Naive thymus-derived CD4-positive, alpha-beta T cell (primary cell): ENCODE measurements at regions of chr14 and their contacts with region 1.

Region 1: DNA sequence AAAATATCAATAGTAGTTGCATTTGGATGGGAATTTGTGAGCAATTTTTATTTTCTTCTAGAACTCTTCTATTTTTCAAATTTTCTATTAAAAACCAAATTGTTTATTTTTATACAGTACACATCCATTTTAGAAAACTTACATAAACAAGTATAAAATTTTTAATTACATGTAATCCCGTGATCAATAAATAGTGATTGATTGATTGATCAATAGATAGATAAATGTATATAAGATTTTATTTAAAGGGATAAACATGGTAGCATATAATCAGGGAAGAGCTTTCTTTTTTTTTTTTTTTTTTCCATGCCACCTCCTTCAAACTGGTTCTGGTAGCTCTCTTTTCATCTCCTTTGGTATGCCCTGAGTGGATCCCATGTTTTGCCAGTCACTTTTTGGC is 118.5 kb downstream of the KLHL28 start:
- DNase-seq: no peak
- ATAC-seq: no peak
- H3K4me3 ChIP-seq: no peak overlapping the region
- H3K4me3 Mint-ChIP-seq: no peak overlapping the region
- H3K27ac ChIP-seq: no peak overlapping the region
- H3K27ac Mint-ChIP-seq: no peak overlapping the region
- H3K4me1 ChIP-seq: no peaks in the 10 kb centered on the region
- H3K4me1 Mint-ChIP-seq: peaks cover 0 to 6% (median 2%) of the 10 kb centered on the region in 7 donors
- H3K27me3 ChIP-seq: no peaks in the 10 kb centered on the region
- H3K27me3 Mint-ChIP-seq: peaks cover 2 to 35% (median 13%) of the 10 kb centered on the region in 5 donors

Region 2: GRCh38 chr14:44405011-44405486 is 438.2 kb before region 1 on chr14:
- CTCF ChIA-PET with region 1: no interaction called
- POLR2A ChIA-PET with region 1: no interaction called
- intact Hi-C with region 1: loop called in 1 of 2 experiments (anchors 5 kb)
- DNase-seq: no peak
- ATAC-seq: no peak
- H3K4me3 ChIP-seq: no peak overlapping the region
- H3K4me3 Mint-ChIP-seq: no peak overlapping the region
- H3K27ac ChIP-seq: no peak overlapping the region
- H3K27ac Mint-ChIP-seq: no peak overlapping the region
- H3K4me1 ChIP-seq: no peaks in the 10 kb centered on the region
- H3K4me1 Mint-ChIP-seq: no peaks in the 10 kb centered on the region
- H3K27me3 ChIP-seq: no peaks in the 10 kb centered on the region
- H3K27me3 Mint-ChIP-seq: no peaks in the 10 kb centered on the region

Region 3: DNA sequence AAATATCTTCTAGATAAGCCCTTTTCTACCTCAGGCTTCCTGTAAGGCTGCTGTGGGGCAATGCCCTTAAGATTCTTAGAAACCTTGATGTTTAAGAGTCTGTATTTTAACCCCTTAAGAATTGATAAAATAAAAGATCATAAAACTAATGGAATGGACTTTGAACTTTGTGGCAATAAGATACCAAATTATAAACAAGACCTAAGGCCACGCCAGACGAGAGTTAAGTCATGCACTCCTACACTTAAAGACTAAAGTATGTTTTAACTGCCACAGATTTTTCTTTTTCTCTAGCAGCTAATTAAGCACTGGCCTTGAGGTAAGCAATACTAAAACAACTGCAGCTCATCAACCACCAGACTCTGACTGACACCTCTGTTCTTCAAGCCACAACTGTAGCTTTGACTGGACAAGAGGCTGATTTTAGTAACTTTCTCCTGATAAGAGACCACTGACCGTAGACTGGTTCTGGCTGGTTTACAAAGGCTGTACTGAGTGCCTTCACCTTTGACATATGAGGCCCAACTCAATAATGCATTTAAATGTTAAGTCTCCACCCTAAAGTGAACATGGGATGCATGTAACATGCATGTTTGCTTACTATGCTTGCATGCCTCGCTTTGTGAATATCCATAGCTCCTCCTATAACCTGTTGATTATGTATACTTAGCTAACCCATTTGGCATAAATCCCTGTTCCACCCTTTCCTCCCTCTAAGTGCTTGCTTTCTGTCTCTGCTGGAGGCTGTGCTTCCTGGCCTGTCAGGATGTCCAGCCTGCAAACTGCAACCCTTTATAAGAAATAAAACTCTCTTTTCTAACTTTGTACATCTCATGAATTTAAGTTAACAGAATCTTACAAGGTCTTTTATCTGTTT is 46.6 kb after region 1 on chr14:
- CTCF ChIA-PET with region 1: no interaction called
- POLR2A ChIA-PET with region 1: no interaction called
- intact Hi-C with region 1: no loop called
- DNase-seq: no peak
- ATAC-seq: no peak
- H3K4me3 ChIP-seq: no peak overlapping the region
- H3K4me3 Mint-ChIP-seq: no peak overlapping the region
- H3K27ac ChIP-seq: no peak overlapping the region
- H3K27ac Mint-ChIP-seq: no peak overlapping the region
- H3K4me1 ChIP-seq: no peaks in the 10 kb centered on the region
- H3K4me1 Mint-ChIP-seq: peaks cover 0 to 6% (median 0%) of the 10 kb centered on the region in 7 donors
- H3K27me3 ChIP-seq: no peaks in the 10 kb centered on the region
- H3K27me3 Mint-ChIP-seq: no peaks in the 10 kb centered on the region